ENCODE measurements at regions of chr6 and their contacts with region 1.

Region 1: GRCh38 chr6:125790358-125791150 is at the start of gene NCOA7:
- DNase-seq: peak; percentile 86
- ATAC-seq: peak; percentile 75
- H3K4me3 Mint-ChIP-seq: peak within 1 kb of the TSS; percentile 83
- H3K27ac Mint-ChIP-seq: peak within 1 kb of the TSS; percentile 90
- H3K4me1 Mint-ChIP-seq: peaks cover 43% of the 10 kb centered on the region
- H3K27me3 Mint-ChIP-seq: no peaks in the 10 kb centered on the region
- CTCF ChIP-seq: no peak
- total RNA-seq, gene NCOA7: 9.0 to 14.4 TPM (median 9.9 TPM) in 3 replicates

Region 2: GRCh38 chr6:125753218-125753936 is 37.2 kb before region 1 on chr6:
- CTCF ChIA-PET with region 1: interaction called, 10 read pairs
- POLR2A ChIA-PET with region 1: interaction called, 4 read pairs
- DNase-seq: no peak
- ATAC-seq: no peak
- H3K4me3 Mint-ChIP-seq: peak overlapping the region; percentile 58
- H3K27ac Mint-ChIP-seq: peak overlapping the region; percentile 89
- H3K4me1 Mint-ChIP-seq: peaks cover 56% of the 10 kb centered on the region
- H3K27me3 Mint-ChIP-seq: peaks cover 10% of the 10 kb centered on the region
- CTCF ChIP-seq: no peak

Region 3: DNA sequence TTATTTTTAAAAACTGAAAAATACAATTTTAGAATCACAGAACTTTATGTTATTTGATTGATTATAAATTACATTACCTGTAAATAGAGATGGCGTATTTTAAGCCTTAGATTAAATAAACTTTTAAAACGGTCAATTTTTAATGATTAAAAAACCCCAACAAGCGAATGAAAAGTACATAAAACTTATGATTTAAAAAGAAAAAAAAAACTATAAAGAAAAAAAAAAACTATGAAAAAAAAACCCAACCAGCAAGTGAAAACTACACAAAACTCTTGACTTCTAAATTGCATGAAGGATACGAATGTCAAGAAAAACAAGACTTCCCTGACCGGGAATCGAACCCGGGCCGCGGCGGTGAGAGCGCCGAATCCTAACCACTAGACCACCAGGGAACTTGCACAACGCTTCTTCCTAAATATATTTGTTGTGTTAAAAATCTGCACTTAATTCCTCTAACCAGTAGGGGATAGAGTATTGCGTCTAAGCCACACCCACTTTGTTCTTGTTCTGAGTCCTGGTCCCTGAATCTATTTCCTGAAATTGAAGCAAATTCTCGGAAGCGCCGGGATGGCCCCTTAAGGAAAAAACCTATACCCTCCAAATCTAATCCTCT is 10.5 kb before region 1 on chr6:
- CTCF ChIA-PET with region 1: interaction called, 28 read pairs
- POLR2A ChIA-PET with region 1: interaction called, 27 read pairs
- DNase-seq: peak; percentile 75
- ATAC-seq: peak; percentile 87
- H3K4me3 Mint-ChIP-seq: no peak overlapping the region
- H3K27ac Mint-ChIP-seq: no peak overlapping the region
- H3K4me1 Mint-ChIP-seq: peaks cover 12% of the 10 kb centered on the region
- H3K27me3 Mint-ChIP-seq: no peaks in the 10 kb centered on the region; the same call in 1 of the 2 replicates
- CTCF ChIP-seq: no peak

Region 4: GRCh38 chr6:125906158-125906998 is 115.8 kb after region 1 on chr6:
- CTCF ChIA-PET with region 1: interaction called, 19 read pairs
- POLR2A ChIA-PET with region 1: interaction called, 4 read pairs
- DNase-seq: peak; percentile 80
- ATAC-seq: peak; percentile 98
- H3K4me3 Mint-ChIP-seq: no peak overlapping the region
- H3K27ac Mint-ChIP-seq: no peak overlapping the region
- H3K4me1 Mint-ChIP-seq: peaks cover 2% of the 10 kb centered on the region; the same call in 1 of the 2 replicates
- H3K27me3 Mint-ChIP-seq: no peaks in the 10 kb centered on the region; the same call in 1 of the 2 replicates
- CTCF ChIP-seq: peak; percentile 76

Region 5: GRCh38 chr6:125974214-125974866 is 183.8 kb after region 1 on chr6:
- CTCF ChIA-PET with region 1: interaction called, 14 read pairs
- POLR2A ChIA-PET with region 1: no interaction called
- DNase-seq: no peak
- ATAC-seq: no peak
- H3K4me3 Mint-ChIP-seq: no peak overlapping the region
- H3K27ac Mint-ChIP-seq: no peak overlapping the region
- H3K4me1 Mint-ChIP-seq: no peaks in the 10 kb centered on the region
- H3K27me3 Mint-ChIP-seq: no peaks in the 10 kb centered on the region
- CTCF ChIP-seq: no peak; the same call in 1 of the 2 replicates